GM10248 (cell line): ENCODE measurements at regions of chr16 and their contacts with region 1.

Region 1: GRCh38 chr16:16861546-16861945 is 482.6 kb downstream of the NPIPA7 start:
- DNase-seq: peak; percentile 61
- CTCF ChIP-seq: peak; percentile 88

Region 2: GRCh38 chr16:16850243-16850642 is 11.3 kb before region 1 on chr16:
- CTCF ChIA-PET with region 1: interaction called, 10 read pairs
- POLR2A ChIA-PET with region 1: no interaction called
- DNase-seq: no peak
- CTCF ChIP-seq: no peak

Region 3: GRCh38 chr16:17105239-17105797 is 243.8 kb after region 1 on chr16:
- CTCF ChIA-PET with region 1: interaction called, 13 read pairs
- POLR2A ChIA-PET with region 1: no interaction called
- DNase-seq: no peak
- CTCF ChIP-seq: no peak